ENCODE measurements at regions of chr16 and their contacts with region 1.

Region 1: DNA sequence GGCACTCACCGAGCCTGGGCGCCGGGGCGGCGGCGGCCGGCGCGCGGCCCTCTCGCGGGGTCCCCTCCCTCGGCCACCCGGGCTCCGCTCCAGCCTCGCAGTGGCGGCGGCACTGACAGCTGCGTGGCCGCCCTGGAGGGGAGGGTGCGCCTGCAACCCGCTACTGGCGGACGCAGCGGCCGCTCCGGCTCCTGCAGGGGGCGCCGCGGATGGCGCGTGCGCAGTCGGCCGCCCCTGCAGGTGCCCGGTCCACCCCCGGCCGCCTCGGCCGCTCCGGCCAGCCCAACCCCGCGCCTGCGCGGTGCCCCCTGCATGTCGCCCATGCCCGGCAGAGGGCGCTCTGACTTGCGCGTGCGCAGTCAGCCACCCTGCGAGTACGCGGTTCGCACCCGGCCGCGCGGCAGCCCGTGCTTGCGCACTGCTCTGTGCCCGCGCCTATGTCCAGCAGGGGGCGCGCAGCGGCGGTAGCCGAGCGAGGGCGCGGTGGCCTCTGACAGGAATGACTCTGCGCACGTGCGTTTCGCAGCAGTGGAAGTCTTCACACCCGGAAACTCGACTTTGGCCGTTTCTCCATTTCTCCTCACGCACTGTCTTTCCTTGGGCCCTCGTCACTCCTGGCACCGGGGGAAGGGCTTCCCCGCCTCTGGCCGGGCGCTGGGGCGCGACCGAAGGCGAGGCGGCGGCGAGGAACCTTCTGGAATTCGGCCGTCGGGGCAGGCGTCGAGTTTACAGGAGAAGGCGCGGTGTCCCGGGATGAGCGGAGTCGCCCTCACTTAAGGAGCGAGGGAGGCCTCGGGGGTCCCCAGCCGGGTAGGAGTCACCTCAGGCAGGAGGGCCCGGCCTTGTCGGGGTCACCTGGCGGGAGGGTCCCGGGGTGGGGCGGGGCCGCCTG is at the start of gene ABCA3:
- DNase-seq: peak; percentile 85 to 96 (median 93)
- H3K4me3 ChIP-seq: peak within 1 kb of the TSS; percentile 1 to 45
- H3K4me3 Mint-ChIP-seq: peak within 1 kb of the TSS; percentile 84 to 88 (median 86)
- H3K27ac ChIP-seq: no peak within 1 kb of the TSS
- H3K27ac Mint-ChIP-seq: peak within 1 kb of the TSS in 6 of 7 donors; percentile 61 to 84 (median 77)
- H3K4me1 ChIP-seq: peaks cover 17% of the 10 kb centered on the region
- H3K4me1 Mint-ChIP-seq: peaks cover 9 to 26% (median 15%) of the 10 kb centered on the region in 4 donors
- H3K27me3 ChIP-seq: no peaks in the 10 kb centered on the region
- H3K27me3 Mint-ChIP-seq: peaks cover 2% of the 10 kb centered on the region in 2 donors
- total RNA-seq, gene ABCA3: 8.5 to 12.7 TPM

Region 2: DNA sequence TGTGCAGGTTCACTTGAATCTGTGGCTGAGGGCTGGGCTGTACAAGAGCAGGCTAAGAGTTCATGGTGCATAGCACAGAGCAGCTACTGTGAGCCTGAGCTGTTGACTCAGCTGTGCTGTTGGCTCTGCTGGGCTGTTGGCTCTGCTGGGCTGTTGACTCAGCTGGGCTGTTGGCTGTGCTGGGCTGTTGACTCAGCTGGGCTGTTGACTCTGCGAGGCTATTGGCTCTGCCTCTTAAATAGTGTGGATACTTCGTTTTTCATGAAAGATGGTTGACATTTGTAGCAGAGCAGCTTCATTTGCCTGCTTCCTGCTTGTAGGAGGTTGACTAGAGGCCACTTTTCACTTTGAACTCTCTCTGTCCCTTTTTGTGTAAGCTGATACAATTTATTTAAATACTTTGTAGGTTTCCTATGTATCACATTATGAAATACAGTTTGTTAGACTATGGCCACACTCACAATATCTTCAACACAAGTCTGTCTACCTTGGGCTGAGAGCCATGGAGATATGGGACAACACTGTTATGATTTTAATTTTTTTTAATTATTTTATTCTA is 48.1 kb after region 1 on chr16:
- CTCF ChIA-PET with region 1: no interaction called
- POLR2A ChIA-PET with region 1: no interaction called
- intact Hi-C with region 1: no loop called
- DNase-seq: no peak
- H3K4me3 ChIP-seq: no peak overlapping the region
- H3K4me3 Mint-ChIP-seq: no peak overlapping the region
- H3K27ac ChIP-seq: no peak overlapping the region
- H3K27ac Mint-ChIP-seq: no peak overlapping the region
- H3K4me1 ChIP-seq: no peaks in the 10 kb centered on the region
- H3K4me1 Mint-ChIP-seq: no peaks in the 10 kb centered on the region
- H3K27me3 ChIP-seq: no peaks in the 10 kb centered on the region
- H3K27me3 Mint-ChIP-seq: peaks cover 6 to 7% of the 10 kb centered on the region in 2 donors

Region 3: DNA sequence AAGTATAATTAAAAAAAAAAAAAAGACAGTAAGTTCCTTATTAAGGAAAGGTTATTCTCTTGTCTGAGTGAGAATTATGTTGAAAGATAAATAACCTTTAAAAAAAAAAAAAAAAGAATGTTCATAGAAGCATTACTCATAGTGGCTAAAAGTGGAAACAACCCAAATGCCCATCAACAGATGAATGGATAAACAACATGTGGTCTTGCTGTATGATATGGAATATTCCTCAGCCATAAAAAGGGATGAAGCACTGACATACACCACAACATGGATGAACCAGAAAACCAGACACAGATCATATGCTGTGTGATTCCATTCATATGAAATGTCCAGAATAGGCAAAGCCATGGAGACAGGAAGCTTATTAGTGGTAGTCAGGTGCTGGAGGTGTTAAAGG is 79.2 kb after region 1 on chr16:
- CTCF ChIA-PET with region 1: no interaction called
- POLR2A ChIA-PET with region 1: no interaction called
- intact Hi-C with region 1: no loop called
- DNase-seq: no peak
- H3K4me3 ChIP-seq: no peak overlapping the region
- H3K4me3 Mint-ChIP-seq: no peak overlapping the region
- H3K27ac ChIP-seq: no peak overlapping the region
- H3K27ac Mint-ChIP-seq: no peak overlapping the region
- H3K4me1 ChIP-seq: no peaks in the 10 kb centered on the region
- H3K4me1 Mint-ChIP-seq: peaks cover 2 to 5% (median 3%) of the 10 kb centered on the region in 4 donors
- H3K27me3 ChIP-seq: no peaks in the 10 kb centered on the region
- H3K27me3 Mint-ChIP-seq: peaks cover 4 to 6% of the 10 kb centered on the region in 2 donors

Region 4: DNA sequence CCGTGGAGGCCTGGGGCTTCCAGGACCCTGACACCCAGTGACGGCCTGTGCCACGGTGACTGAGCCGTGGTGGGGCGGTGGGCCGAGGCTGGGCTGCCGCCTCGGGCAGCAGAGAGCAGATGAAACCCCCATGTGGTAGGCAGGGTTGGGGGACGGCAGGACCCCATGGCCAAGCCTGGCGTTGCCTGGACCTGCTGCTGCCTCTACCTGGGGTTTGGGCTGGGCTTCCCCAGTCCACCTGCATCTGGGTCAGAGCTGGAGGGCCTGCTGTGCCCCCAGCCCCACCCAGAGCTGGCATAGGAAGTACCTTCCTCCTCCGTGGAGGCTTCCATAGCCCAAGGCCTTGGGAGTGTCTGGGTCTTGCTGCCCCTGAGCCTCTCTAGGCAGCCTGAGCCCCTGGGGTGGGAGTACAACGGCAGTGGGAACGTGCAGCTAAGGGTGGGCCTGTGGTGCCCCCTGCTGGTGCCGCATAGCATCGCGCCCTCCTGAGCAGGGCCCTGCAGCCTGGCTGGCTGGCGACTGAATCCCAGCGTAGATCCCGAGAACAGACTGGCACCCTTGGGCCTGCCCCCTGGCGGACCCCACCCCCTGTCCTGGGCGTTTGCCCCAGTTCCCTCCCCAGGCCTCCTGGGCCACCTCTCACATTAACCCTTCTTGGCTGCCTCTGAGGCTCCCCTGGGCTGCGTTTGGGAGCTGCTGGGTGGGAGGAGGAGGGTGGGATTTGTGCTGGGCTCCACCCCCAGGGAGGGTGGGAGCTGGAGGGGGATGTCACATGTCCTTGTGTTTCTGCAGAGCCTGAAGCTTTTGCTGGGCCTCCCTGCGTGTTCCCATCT is 160.3 kb after region 1 on chr16:
- CTCF ChIA-PET with region 1: no interaction called
- POLR2A ChIA-PET with region 1: interaction called, 6 read pairs
- intact Hi-C with region 1: loop called (anchors 1 kb)
- DNase-seq: peak; percentile 73 to 81 (median 75)
- H3K4me3 ChIP-seq: no peak overlapping the region
- H3K4me3 Mint-ChIP-seq: no peak overlapping the region
- H3K27ac ChIP-seq: no peak overlapping the region
- H3K27ac Mint-ChIP-seq: no peak overlapping the region
- H3K4me1 ChIP-seq: no peaks in the 10 kb centered on the region
- H3K4me1 Mint-ChIP-seq: no peaks in the 10 kb centered on the region
- H3K27me3 ChIP-seq: no peaks in the 10 kb centered on the region
- H3K27me3 Mint-ChIP-seq: no peaks in the 10 kb centered on the region